ENCODE measurements at regions of chr6 and their contacts with region 1.

Region 1: DNA sequence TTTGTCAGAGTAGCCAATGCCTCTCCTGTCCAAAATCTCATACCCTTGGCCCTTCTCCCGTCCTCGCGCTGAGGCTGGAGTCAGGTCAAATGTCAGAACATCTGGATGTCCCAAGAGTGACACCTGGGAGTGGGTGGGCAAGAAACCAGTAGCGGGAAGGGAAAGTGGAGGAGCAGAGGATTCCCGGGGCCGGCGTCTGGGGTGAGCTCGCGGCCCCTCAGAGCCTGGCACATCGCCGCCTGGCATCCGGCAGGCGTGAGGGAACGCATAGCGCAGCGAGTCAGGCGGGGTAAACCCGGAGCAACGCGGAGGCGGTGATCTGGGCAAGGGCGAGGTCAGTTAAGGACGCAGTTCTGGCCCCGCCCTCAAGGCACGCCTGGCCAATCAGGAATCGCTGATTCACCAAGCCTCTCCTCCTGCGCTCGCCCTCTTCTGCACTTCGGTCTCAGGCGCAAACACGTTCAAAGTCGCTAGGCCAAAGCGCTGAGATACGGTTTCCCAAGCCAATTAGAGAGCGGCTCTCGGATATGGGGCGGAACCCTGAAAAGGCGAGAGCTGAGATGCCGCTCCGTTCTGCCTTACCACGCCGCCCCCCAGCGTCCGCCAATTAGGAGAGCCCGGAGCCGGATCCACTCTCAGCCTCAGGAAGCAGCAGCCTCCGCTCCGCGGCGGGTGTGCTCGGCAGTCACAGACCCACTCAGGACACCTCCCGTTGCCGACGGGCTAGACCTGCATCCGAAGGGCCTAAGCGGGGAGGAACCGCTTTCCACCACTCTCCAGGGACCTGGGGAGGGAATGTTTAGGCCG is 22.5 kb downstream of the VPS52 start:
- DNase-seq: peak; percentile 96 to 100 (median 99)
- H3K4me3 ChIP-seq: peak overlapping the region in 3 of 4 donors; percentile 37 to 63 (median 40)
- H3K27ac ChIP-seq: peak overlapping the region; percentile 87 to 96 (median 93)
- H3K4me1 ChIP-seq: peaks cover 20 to 23% of the 10 kb centered on the region in 2 donors
- H3K27me3 ChIP-seq: no peaks in the 10 kb centered on the region
- CTCF ChIP-seq: peak in 4 of 6 experiments; percentile 0 to 14 (median 10)
- POLR2A ChIP-seq: peak; percentile 76 to 98

Region 2: DNA sequence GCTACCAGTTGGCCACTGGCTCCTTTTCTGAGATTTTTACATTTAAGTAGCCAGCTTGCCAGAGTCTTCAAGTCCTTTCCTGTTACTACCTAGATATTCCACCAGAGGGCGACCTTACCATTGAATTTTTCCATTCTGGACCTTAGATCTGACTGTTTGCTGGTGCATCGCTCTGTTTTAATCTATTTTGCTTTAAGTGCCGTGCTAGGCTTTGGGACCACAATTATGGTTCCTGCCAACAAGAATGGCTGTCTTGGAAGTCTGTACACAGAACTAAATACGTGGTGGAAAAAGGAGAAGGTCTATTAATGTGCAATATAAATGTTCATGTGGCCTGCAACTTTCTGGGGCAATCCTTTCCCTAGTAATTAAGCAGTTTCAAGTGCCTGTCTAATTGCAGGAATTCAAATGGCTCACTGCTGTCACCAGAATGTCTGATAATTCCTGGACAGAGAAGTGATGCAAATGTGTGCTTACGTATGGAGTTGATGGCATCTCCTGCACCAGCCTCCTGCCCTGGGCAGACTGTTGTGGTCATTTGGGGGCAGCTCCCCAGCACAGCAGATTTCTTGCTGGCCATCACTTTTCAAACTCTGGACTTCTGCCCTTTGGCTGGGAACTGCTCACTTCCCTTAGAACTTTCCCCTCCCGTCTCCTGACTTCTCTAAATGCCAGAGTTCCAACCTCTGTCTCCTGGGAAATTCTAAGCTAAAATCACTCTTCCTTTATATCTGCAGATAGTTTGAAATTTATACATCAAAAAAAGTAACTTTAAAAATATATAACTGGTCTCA is 234.1 kb before region 1 on chr6:
- intact Hi-C with region 1: loop called in 1 of 2 experiments (anchors 10 kb)
- DNase-seq: peak; percentile 38 to 74 (median 64)
- H3K4me3 ChIP-seq: no peak overlapping the region
- H3K27ac ChIP-seq: peak overlapping the region in 1 of 5 donors; percentile 59
- H3K4me1 ChIP-seq: peaks cover 12 to 15% of the 10 kb centered on the region in 2 donors
- H3K27me3 ChIP-seq: peaks cover 10% of the 10 kb centered on the region
- CTCF ChIP-seq: peak; percentile 75 to 88 (median 83)
- POLR2A ChIP-seq: no peak

Region 3: DNA sequence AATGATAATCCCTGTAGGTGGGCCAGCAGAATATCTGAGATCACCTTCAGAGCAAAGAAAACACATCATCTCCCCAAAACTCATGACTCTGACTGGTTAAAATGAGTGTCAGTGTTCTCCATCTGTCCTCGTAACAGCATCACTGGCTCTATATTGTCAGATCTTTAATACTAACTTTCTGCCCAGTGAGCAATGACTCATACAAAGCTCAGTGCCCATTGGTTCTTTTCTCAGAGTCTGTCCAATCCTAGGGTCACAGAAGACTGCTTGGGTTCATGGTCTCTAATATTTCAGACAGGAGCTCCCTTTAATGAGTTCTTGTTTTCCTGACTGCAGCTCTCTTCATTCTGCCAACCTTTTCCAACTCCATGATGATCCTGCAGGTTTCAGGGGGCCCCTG is 137.0 kb before region 1 on chr6:
- intact Hi-C with region 1: loop called in 1 of 2 experiments (anchors 10 kb)
- DNase-seq: peak in 6 of 7 donors; percentile 29 to 70 (median 52)
- H3K4me3 ChIP-seq: no peak overlapping the region
- H3K27ac ChIP-seq: no peak overlapping the region
- H3K4me1 ChIP-seq: no peaks in the 10 kb centered on the region
- H3K27me3 ChIP-seq: peaks cover 11% of the 10 kb centered on the region
- CTCF ChIP-seq: no peak
- POLR2A ChIP-seq: no peak

Region 4: DNA sequence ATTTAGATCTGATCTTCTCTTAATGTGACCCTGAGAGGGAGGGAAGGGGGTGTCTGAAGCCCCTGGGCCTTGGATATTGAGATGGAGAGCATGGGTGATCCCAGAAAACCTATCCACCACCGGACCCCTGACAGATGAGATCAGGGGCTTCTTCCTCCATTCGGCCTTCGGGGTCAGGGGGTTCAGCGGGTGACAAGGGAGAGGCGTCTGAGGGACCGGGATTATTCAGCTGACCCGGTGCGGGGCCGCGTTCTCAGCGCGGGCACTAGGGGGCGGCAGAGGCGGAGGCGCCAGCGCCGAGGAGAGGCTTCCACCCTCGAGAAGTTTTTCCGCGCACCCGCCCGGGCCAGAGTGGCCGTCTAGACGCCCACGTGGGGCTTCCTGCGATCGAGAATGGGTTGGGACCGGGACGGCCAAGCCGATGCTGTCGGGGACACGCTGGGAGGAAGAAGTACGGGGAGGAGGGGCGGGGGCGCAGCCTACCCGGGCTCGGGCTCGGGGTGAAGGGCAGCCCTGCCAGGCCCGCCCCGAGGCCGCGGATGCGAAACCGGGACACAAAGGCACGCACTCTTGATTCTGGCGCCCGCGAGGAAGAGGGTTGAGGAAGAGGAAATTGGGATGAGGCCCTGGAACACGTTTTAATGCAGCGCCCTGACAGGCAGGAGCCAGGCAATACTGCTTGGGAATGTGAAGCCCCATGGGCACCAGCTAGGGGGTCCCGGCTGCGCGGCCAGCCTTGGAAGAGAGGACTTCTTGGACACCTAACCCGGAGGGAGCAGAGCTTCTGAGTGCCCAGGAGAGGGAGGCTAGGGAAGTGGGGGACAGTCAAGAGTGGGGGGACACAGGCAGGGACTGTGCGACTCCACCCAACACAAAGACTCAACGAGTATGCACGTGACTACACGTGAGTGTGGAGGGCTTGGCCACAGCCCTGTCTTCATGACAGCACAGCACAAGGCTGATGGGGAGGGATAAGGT is 87.5 kb before region 1 on chr6:
- intact Hi-C with region 1: loop called (anchors 5 kb)
- DNase-seq: peak; percentile 69 to 86 (median 78)
- H3K4me3 ChIP-seq: peak overlapping the region in 3 of 4 donors; percentile 3 to 45 (median 39)
- H3K27ac ChIP-seq: no peak overlapping the region
- H3K4me1 ChIP-seq: peaks cover 0 to 5% of the 10 kb centered on the region in 2 donors
- H3K27me3 ChIP-seq: no peaks in the 10 kb centered on the region
- CTCF ChIP-seq: peak; percentile 75 to 96 (median 88)
- POLR2A ChIP-seq: no peak

Region 5: DNA sequence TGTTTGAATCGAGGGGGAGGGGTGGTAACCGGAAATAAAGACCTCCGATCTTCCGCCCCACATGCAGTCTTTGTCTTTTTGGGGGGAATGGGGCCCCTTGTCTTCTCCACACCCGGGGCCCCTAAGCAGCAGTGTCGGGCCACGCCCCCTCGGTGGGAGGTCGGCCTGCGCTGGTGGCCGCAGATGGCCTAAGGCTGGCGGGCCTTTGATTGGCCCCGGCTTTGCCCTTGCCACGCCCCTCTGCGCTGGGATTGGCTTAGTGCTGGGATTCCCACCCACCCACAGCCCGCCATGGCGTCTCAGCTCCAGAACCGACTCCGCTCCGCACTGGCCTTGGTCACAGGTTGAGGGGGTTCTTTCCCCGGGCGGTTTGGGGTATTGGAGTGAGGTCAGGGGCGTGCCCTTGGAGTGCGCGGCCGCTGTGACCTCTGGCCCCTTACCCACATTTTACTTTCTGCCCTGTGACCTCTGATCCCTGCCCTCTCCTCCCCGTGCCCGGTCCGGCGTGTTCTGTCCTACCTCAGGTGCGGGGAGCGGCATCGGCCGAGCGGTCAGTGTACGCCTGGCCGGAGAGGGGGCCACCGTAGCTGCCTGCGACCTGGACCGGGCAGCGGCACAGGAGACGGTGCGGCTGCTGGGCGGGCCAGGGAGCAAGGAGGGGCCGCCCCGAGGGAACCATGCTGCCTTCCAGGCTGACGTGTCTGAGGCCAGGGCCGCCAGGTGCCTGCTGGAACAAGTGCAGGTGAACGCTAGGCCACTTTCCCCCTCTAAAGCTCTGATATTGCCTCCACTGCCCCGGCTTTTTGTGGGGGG is 44.5 kb before region 1 on chr6 and contains the start of gene HSD17B8:
- intact Hi-C with region 1: loop called in 1 of 2 experiments (anchors 5 kb)
- DNase-seq: peak; percentile 91 to 97 (median 96)
- H3K4me3 ChIP-seq: peak within 1 kb of the TSS; percentile 21 to 65 (median 38)
- H3K27ac ChIP-seq: peak within 1 kb of the TSS in 3 of 5 donors; percentile 28 to 76 (median 40)
- H3K4me1 ChIP-seq: peaks cover 31 to 43% of the 10 kb centered on the region in 2 donors
- H3K27me3 ChIP-seq: no peaks in the 10 kb centered on the region
- CTCF ChIP-seq: no peak
- POLR2A ChIP-seq: peak; percentile 34 to 42
- total RNA-seq, gene HSD17B8: 13.4 to 96.3 (median 42.8) TPM

Region 6: DNA sequence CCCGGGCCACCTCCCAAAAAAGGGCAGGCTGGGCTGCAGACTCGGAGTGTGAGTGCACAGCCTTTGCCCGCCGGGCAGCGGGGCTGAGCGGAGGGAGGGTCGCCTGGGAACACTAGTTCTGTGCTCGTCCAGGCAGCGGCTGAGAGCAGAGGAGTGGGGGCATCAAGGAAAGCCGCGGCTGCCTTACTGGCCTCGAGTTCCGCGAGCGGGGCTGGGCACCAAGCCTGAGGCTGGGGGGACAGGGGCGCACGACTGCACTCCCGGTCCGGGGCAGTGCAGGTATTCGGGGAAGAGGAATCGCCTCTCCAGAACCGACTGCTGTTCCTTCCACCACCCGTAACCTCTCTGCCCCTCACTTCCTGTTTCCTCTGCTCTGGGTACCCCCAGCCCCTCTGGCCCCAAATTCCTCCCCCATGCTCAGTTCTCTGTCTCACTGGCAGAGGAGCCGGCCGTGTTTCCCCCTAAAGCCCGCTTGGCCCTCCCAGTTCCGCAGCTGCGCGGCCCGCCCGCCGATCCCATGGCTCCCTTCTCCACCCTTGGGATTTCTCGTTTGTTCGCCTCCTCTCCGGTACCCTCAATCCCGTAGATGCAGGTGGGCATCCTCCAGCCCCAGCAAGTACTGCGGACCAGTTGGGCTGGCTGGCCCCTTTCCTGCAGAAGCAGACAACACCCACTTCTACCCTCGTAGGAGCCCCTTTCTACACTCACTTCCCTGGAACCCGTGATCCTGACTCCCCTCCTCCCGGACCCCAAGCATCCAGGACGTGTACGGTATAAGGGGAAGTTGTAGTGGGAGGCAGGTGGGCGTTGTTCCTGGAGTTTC is 35.8 kb before region 1 on chr6:
- intact Hi-C with region 1: loop called (anchors 5 kb)
- DNase-seq: peak in 3 of 7 donors; percentile 20 to 34 (median 23)
- H3K4me3 ChIP-seq: peak overlapping the region in 2 of 4 donors; percentile 11 to 44
- H3K27ac ChIP-seq: no peak overlapping the region
- H3K4me1 ChIP-seq: peaks cover 3 to 16% of the 10 kb centered on the region in 2 donors
- H3K27me3 ChIP-seq: no peaks in the 10 kb centered on the region
- CTCF ChIP-seq: no peak
- POLR2A ChIP-seq: no peak